Endothelial cell of umbilical vein (primary cell): ENCODE measurements at regions of chr15 and their contacts with region 1.

Region 1: DNA sequence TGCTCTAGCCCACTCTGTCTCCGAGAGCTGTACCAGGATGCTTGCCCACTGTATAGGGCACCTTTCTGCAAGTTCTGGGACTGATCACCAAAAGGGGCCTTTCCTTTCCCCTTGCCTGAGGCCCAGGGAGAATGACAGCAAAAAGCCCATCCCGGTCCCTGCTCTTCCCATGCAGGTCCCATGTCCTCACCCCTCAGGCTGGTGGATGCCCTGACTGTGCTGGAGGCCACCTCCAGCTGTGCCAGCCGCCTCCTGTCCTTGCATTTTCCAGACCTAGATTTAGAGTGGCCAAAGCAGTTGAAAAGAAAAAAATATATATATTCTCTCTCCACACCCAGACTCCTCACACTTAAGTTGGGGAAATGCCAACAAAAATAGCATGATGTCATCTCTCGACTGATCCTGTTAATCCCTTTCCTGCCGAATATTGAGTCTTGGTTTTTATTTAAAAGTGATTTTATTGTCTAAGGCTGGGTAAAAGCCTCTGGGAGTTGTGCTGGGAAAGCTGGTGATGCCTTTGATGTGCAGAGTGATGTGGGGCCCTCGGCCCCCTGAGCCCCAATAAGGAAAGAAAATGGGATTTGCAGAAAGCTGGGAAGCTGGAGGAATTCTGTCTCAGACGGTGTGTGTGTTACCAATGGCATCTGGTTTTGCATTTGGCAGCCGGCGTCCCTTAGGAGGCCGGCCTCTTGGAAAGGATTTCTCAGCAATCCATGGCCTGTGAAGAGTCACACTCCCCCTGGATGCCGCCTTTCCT is 29.3 kb upstream of the TPM1 start:
- DNase-seq: peak; percentile 86
- H3K4me3 ChIP-seq: no peak overlapping the region
- H3K27ac ChIP-seq: peak overlapping the region; percentile 59
- H3K4me1 ChIP-seq: peaks cover 25% of the 10 kb centered on the region
- H3K27me3 ChIP-seq: no peaks in the 10 kb centered on the region
- CTCF ChIP-seq: no peak
- POLR2A ChIP-seq: no peak

Region 2: GRCh38 chr15:62940755-62941361 is 72.4 kb before region 1 on chr15:
- CTCF ChIA-PET with region 1: no interaction called
- POLR2A ChIA-PET with region 1: no interaction called
- dilution Hi-C with region 1: no loop called
- intact Hi-C with region 1: loop called (anchors 1 kb)
- DNase-seq: peak; percentile 25
- H3K4me3 ChIP-seq: no peak overlapping the region
- H3K27ac ChIP-seq: no peak overlapping the region
- H3K4me1 ChIP-seq: no peaks in the 10 kb centered on the region
- H3K27me3 ChIP-seq: no peaks in the 10 kb centered on the region
- CTCF ChIP-seq: no peak
- POLR2A ChIP-seq: no peak

Region 3: DNA sequence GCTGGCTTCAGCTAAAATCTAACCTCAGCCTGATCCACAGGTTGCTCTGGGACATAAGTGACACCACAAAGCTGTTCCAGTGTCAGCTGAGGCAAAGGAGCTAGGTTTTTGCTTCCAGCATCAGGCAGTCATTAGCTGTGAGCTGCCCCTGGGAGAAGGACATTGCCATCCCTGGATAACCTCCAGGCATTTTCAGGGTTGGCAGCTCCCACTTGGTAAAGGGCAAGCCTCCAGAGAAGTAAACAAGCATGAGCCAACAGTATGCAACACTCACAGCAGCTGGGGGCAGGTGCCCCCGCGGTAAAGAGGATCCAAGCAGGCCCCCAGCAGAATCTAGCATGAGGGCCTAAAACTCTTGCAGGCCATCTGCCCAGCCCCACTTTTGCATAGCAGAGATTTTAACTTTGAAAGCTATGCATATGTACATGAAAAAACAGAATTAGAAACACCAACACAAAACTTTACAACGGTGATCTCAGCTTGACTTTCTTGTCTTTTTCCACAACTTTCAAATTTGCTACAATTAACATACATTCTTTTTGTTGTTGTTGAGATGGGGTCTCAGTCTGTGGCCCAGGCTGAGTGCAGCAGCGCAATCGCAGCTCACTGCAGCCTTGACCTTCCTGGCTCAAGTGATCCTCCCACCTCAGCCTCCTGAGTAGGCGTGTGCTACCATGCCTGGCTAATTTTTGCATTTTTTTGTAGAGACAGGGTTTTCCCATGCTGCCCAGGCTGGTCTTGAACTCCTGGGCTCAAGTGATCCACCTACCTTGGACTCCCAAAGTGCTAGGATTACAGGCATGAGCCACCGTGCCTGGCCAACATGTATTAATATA is 54.5 kb before region 1 on chr15:
- CTCF ChIA-PET with region 1: no interaction called
- POLR2A ChIA-PET with region 1: no interaction called
- dilution Hi-C with region 1: no loop called
- intact Hi-C with region 1: loop called (anchors 5 kb)
- DNase-seq: no peak
- H3K4me3 ChIP-seq: no peak overlapping the region
- H3K27ac ChIP-seq: no peak overlapping the region
- H3K4me1 ChIP-seq: peaks cover 18% of the 10 kb centered on the region
- H3K27me3 ChIP-seq: no peaks in the 10 kb centered on the region
- CTCF ChIP-seq: no peak
- POLR2A ChIP-seq: no peak

Region 4: DNA sequence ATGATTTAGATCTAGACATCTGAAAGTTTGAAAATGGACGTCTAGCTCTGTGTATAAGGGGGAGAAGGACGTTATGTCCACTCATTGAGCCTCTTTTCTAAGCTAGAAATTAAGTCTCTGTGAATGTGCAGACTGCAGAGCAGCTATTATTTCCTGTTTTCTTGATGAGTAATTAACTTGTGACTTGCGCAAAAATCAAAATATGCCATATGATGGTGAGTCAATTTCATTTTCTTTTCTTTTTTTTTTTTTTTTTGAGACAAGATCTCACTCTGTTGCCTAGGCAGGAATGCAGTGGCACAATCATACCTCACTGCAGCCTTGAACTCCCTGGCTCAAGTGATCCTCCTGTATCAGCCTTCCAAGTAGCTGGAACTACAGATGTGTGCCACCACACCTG is 122.6 kb after region 1 on chr15:
- CTCF ChIA-PET with region 1: no interaction called
- POLR2A ChIA-PET with region 1: no interaction called
- dilution Hi-C with region 1: no loop called
- intact Hi-C with region 1: no loop called
- DNase-seq: peak; percentile 94
- H3K4me3 ChIP-seq: no peak overlapping the region
- H3K27ac ChIP-seq: peak overlapping the region; percentile 96
- H3K4me1 ChIP-seq: peaks cover 36% of the 10 kb centered on the region
- H3K27me3 ChIP-seq: no peaks in the 10 kb centered on the region
- CTCF ChIP-seq: no peak
- POLR2A ChIP-seq: peak; percentile 78